Posterior vena cava (tissue), 2 donors: ENCODE measurements at regions of chr1 and their contacts with region 1.

Region 1: DNA sequence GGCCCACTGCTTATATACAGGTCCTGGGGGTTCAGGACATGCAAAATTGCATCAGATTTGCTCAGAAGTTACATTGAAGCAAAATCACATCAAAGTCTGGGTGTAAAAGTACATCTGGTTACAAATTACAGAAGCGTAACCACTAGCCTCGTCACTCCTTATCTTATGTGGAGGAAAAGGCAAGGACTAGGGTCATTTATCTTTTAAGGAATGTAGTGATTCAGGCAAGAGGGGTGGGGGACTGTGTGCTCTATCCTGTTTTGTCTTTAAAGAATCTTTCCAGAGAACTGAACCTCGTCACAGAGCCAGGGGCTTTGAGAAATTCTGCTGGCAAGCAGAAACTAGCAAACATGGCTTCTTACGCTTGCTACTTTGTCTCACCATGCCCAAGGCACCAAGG is 61.1 kb upstream of the RAB4A start:
- DNase-seq: no peak

Region 2: DNA sequence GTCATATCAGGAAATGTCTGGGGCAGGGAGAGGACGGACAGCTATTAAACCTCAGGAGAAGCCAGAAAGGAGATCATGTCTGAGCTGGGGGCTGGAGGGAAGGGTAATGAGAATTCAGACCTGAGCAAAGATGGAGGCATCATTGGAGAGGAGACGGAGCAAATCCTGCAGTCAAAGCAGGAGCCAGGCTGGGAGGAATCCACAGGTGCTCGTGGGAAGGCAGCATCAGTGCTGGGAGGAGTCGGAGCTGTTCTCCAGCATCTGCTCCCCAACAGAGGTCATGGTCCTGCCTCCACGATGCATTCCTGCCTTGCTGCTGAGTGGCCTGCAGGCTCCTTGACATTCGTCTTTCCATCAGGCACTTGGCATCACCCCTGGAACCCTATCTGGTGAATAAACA is 87.2 kb before region 1 on chr1:
- intact Hi-C with region 1: loop called in 1 of 2 experiments (anchors 1 kb)
- DNase-seq: no peak

Region 3: GRCh38 chr1:229171934-229172333 is 37.9 kb before region 1 on chr1:
- intact Hi-C with region 1: loop called in 1 of 2 experiments (anchors 2 kb)
- DNase-seq: no peak

Region 4: GRCh38 chr1:229192853-229193252 is 17.0 kb before region 1 on chr1:
- intact Hi-C with region 1: loop called in 1 of 2 experiments (anchors 1 kb)
- DNase-seq: no peak

Region 5: GRCh38 chr1:229352975-229353374 is 143.2 kb after region 1 on chr1:
- intact Hi-C with region 1: no loop called
- DNase-seq: no peak